ENCODE measurements at regions of chr2 and their contacts with region 1.

Region 1: GRCh38 chr2:235898766-235899165 is 269.4 kb downstream of the GBX2 start:
- DNase-seq: no peak
- H3K4me3 ChIP-seq: no peak overlapping the region
- H3K27ac ChIP-seq: no peak overlapping the region
- H3K4me1 ChIP-seq: no peaks in the 10 kb centered on the region
- H3K27me3 ChIP-seq: no peaks in the 10 kb centered on the region
- CTCF ChIP-seq: no peak

Region 2: DNA sequence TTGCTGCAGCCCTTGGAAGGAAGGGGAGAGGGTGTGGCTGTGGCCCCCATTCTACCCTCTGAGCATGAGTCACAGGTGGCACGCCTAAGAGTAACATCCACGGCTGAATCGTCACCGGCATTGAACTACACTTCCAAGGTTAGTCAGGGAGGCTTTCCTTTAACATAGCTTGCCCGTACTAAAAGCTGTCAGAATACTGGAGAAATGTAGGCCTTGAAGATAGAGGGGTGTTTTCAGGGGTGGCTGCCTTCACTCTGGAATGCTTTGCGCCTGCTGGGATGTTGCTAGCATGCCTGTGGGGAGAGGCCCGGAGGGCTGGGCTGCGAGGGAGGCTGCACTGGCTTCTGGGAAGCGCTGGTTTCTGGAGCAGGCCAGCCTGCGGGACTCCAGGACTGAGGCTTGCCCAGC is 71.2 kb before region 1 on chr2:
- CTCF ChIA-PET with region 1: no interaction called
- dilution Hi-C with region 1: loop called (anchors 5 kb)
- in situ Hi-C with region 1: no loop called
- intact Hi-C with region 1: no loop called
- DNase-seq: no peak
- H3K4me3 ChIP-seq: no peak overlapping the region
- H3K27ac ChIP-seq: no peak overlapping the region
- H3K4me1 ChIP-seq: peaks cover 8% of the 10 kb centered on the region
- H3K27me3 ChIP-seq: no peaks in the 10 kb centered on the region
- CTCF ChIP-seq: no peak

Measured in mammary epithelial cell (primary cell).